Endothelial cell of umbilical vein (primary cell): ENCODE measurements at regions of chr3 and their contacts with region 1.

Region 1: GRCh38 chr3:115503394-115503793 is 119.9 kb upstream of the GAP43 start:
- DNase-seq: no peak
- H3K4me3 ChIP-seq: no peak overlapping the region
- H3K27ac ChIP-seq: no peak overlapping the region
- H3K4me1 ChIP-seq: peaks cover 19% of the 10 kb centered on the region
- H3K27me3 ChIP-seq: peaks cover under 1 to 3% of the 10 kb centered on the region in 2 experiments
- CTCF ChIP-seq: no peak
- POLR2A ChIP-seq: no peak

Region 2: GRCh38 chr3:115239717-115240116 is 263.7 kb before region 1 on chr3:
- CTCF ChIA-PET with region 1: no interaction called
- POLR2A ChIA-PET with region 1: no interaction called
- dilution Hi-C with region 1: no loop called
- intact Hi-C with region 1: loop called (anchors 1 kb)
- DNase-seq: peak; percentile 99
- H3K4me3 ChIP-seq: no peak overlapping the region
- H3K27ac ChIP-seq: peak overlapping the region; percentile 70
- H3K4me1 ChIP-seq: peaks cover 20% of the 10 kb centered on the region
- H3K27me3 ChIP-seq: no peaks in the 10 kb centered on the region
- CTCF ChIP-seq: no peak
- POLR2A ChIP-seq: no peak

Region 3: GRCh38 chr3:115469649-115470048 is 33.7 kb before region 1 on chr3:
- CTCF ChIA-PET with region 1: no interaction called
- POLR2A ChIA-PET with region 1: no interaction called
- dilution Hi-C with region 1: no loop called
- intact Hi-C with region 1: no loop called
- DNase-seq: peak; percentile 32
- H3K4me3 ChIP-seq: no peak overlapping the region
- H3K27ac ChIP-seq: no peak overlapping the region
- H3K4me1 ChIP-seq: no peaks in the 10 kb centered on the region
- H3K27me3 ChIP-seq: no peaks in the 10 kb centered on the region
- CTCF ChIP-seq: no peak
- POLR2A ChIP-seq: no peak

Region 4: DNA sequence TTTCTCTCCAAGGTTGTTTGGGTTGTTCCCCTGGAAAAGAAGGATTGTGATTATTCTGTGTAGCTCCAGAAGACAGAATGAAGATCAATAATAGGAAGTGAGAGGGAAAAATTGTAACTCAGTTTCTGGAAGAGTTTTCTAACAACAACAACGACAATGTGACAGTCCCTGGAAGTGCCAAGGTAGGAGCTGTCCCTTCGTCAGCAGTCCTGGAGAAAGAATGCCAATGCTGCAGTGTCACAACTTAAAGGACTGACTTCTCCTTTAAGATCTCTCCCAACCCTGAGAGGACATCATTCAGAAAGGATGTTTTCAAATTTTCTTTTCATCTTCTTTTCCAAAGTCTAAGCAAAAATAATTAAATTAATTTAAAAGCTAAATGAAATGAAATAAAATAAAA is 16.5 kb before region 1 on chr3:
- CTCF ChIA-PET with region 1: no interaction called
- POLR2A ChIA-PET with region 1: no interaction called
- dilution Hi-C with region 1: no loop called
- intact Hi-C with region 1: no loop called
- DNase-seq: no peak
- H3K4me3 ChIP-seq: no peak overlapping the region
- H3K27ac ChIP-seq: no peak overlapping the region
- H3K4me1 ChIP-seq: no peaks in the 10 kb centered on the region
- H3K27me3 ChIP-seq: peaks cover 4 to 11% of the 10 kb centered on the region in 2 experiments
- CTCF ChIP-seq: no peak
- POLR2A ChIP-seq: no peak

Region 5: GRCh38 chr3:115518100-115518852 is 14.9 kb after region 1 on chr3:
- CTCF ChIA-PET with region 1: interaction called, 6 read pairs
- POLR2A ChIA-PET with region 1: no interaction called
- dilution Hi-C with region 1: no loop called
- intact Hi-C with region 1: loop called (anchors 2 kb)
- DNase-seq: peak; percentile 92
- H3K4me3 ChIP-seq: no peak overlapping the region
- H3K27ac ChIP-seq: peak overlapping the region; percentile 2
- H3K4me1 ChIP-seq: peaks cover 8% of the 10 kb centered on the region
- H3K27me3 ChIP-seq: peaks cover 0 to 1% of the 10 kb centered on the region in 2 experiments
- CTCF ChIP-seq: no peak
- POLR2A ChIP-seq: no peak

Region 6: GRCh38 chr3:115581362-115582135 is 78.2 kb after region 1 on chr3:
- CTCF ChIA-PET with region 1: no interaction called
- POLR2A ChIA-PET with region 1: no interaction called
- dilution Hi-C with region 1: no loop called
- intact Hi-C with region 1: no loop called
- DNase-seq: no peak
- H3K4me3 ChIP-seq: no peak overlapping the region
- H3K27ac ChIP-seq: no peak overlapping the region
- H3K4me1 ChIP-seq: no peaks in the 10 kb centered on the region
- H3K27me3 ChIP-seq: peaks cover 2% of the 10 kb centered on the region in 2 experiments
- CTCF ChIP-seq: no peak
- POLR2A ChIP-seq: no peak

Region 7: GRCh38 chr3:115658337-115659181 is 155.2 kb after region 1 on chr3:
- CTCF ChIA-PET with region 1: no interaction called
- POLR2A ChIA-PET with region 1: no interaction called
- dilution Hi-C with region 1: no loop called
- intact Hi-C with region 1: loop called (anchors 5 kb)
- DNase-seq: peak; percentile 82
- H3K4me3 ChIP-seq: peak overlapping the region; percentile 74 to 91 (median 82)
- H3K27ac ChIP-seq: peak overlapping the region; percentile 80
- H3K4me1 ChIP-seq: peaks cover 12% of the 10 kb centered on the region
- H3K27me3 ChIP-seq: peaks cover 7 to 8% of the 10 kb centered on the region in 2 experiments
- CTCF ChIP-seq: no peak
- POLR2A ChIP-seq: peak; percentile 51